ENCODE measurements at regions of chr18 and their contacts with region 1.

Region 1: GRCh38 chr18:80108728-80109675 is at the start of gene ADNP2:
- DNase-seq: peak; percentile 97
- ATAC-seq: peak; percentile 83
- H3K4me3 ChIP-seq: peak within 1 kb of the TSS; percentile 87
- H3K27ac ChIP-seq: peak within 1 kb of the TSS; percentile 77
- H3K4me1 ChIP-seq: peaks cover 10% of the 10 kb centered on the region; the same call in 1 of the 2 replicates
- H3K27me3 ChIP-seq: no peaks in the 10 kb centered on the region
- CTCF ChIP-seq: no peak
- total RNA-seq, gene ADNP2: 23.2 and 25.2 TPM in 2 replicates

Region 2: GRCh38 chr18:80034068-80034851 is 74.7 kb before region 1 on chr18 and contains the start of gene RBFA:
- CTCF ChIA-PET with region 1: no interaction called
- POLR2A ChIA-PET with region 1: no interaction called
- intact Hi-C with region 1: loop called (anchors 2 kb)
- DNase-seq: peak; percentile 95
- ATAC-seq: peak; percentile 76
- H3K4me3 ChIP-seq: peak within 1 kb of the TSS; percentile 97
- H3K27ac ChIP-seq: peak within 1 kb of the TSS; percentile 78
- H3K4me1 ChIP-seq: peaks cover 14% of the 10 kb centered on the region; the same call in 1 of the 2 replicates
- H3K27me3 ChIP-seq: no peaks in the 10 kb centered on the region
- CTCF ChIP-seq: peak; percentile 56; the same call in 1 of the 2 replicates
- total RNA-seq, gene RBFA: 38.9 and 50.7 TPM in 2 replicates

Region 3: GRCh38 chr18:80086281-80086680 is 22.7 kb before region 1 on chr18:
- CTCF ChIA-PET with region 1: no interaction called
- POLR2A ChIA-PET with region 1: no interaction called
- intact Hi-C with region 1: no loop called
- DNase-seq: peak; percentile 9
- ATAC-seq: no peak
- H3K4me3 ChIP-seq: no peak overlapping the region
- H3K27ac ChIP-seq: no peak overlapping the region
- H3K4me1 ChIP-seq: no peaks in the 10 kb centered on the region
- H3K27me3 ChIP-seq: no peaks in the 10 kb centered on the region
- CTCF ChIP-seq: no peak